ENCODE measurements at regions of chr5 and their contacts with region 1.

Region 1: GRCh38 chr5:119483155-119483554 is 30.9 kb downstream of the HSD17B4 start:
- DNase-seq: no peak
- H3K4me3 ChIP-seq: no peak overlapping the region
- H3K27me3 ChIP-seq: no peaks in the 10 kb centered on the region
- CTCF ChIP-seq: no peak

Region 2: GRCh38 chr5:119470851-119471451 is 12.2 kb before region 1 on chr5:
- CTCF ChIA-PET with region 1: interaction called, 10 read pairs
- POLR2A ChIA-PET with region 1: no interaction called
- DNase-seq: no peak
- H3K4me3 ChIP-seq: no peak overlapping the region
- H3K27me3 ChIP-seq: no peaks in the 10 kb centered on the region
- CTCF ChIP-seq: peak; percentile 69

Measured in BJ (cell line).